Caco-2 (cell line): ENCODE measurements at regions of chr2 and their contacts with region 1.

Region 1: GRCh38 chr2:167964650-167965413 is 282.6 kb downstream of the STK39 start:
- DNase-seq: no peak
- H3K4me3 ChIP-seq: no peak overlapping the region
- H3K4me3 Mint-ChIP-seq: no peak overlapping the region
- H3K27ac Mint-ChIP-seq: no peak overlapping the region
- H3K4me1 ChIP-seq: no peaks in the 10 kb centered on the region
- H3K4me1 Mint-ChIP-seq: no peaks in the 10 kb centered on the region
- H3K27me3 ChIP-seq: no peaks in the 10 kb centered on the region
- H3K27me3 Mint-ChIP-seq: no peaks in the 10 kb centered on the region
- CTCF ChIP-seq: peak; percentile 42 to 45

Region 2: GRCh38 chr2:168006498-168006897 is 41.7 kb after region 1 on chr2:
- CTCF ChIA-PET with region 1: no interaction called
- POLR2A ChIA-PET with region 1: no interaction called
- intact Hi-C with region 1: no loop called
- DNase-seq: no peak
- H3K4me3 ChIP-seq: no peak overlapping the region
- H3K4me3 Mint-ChIP-seq: no peak overlapping the region
- H3K27ac Mint-ChIP-seq: no peak overlapping the region
- H3K4me1 ChIP-seq: peaks cover 10% of the 10 kb centered on the region; the same call in 1 of the 2 replicates
- H3K4me1 Mint-ChIP-seq: peaks cover 13% of the 10 kb centered on the region
- H3K27me3 ChIP-seq: no peaks in the 10 kb centered on the region
- H3K27me3 Mint-ChIP-seq: no peaks in the 10 kb centered on the region
- CTCF ChIP-seq: no peak

Region 3: DNA sequence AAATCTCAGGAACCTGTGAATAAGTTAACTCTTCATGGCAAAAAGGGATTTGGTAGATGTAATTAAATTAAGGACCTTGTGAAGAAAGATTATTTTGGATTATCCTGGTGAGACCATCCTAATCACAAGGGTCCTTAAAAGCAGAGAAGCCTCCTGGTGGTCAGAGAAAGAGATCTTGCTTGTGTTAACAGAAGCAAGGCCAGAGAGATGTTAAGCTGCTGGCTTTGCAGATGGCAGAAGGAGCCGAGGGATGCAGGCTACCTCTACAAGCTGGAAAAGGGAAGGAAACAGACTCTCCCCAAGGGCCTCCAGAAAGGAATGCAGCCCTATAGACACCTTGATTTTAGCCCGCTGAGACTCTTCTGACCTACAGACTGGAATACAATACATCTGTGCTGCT is 85.5 kb after region 1 on chr2:
- CTCF ChIA-PET with region 1: no interaction called
- POLR2A ChIA-PET with region 1: no interaction called
- intact Hi-C with region 1: loop called (anchors 5 kb)
- DNase-seq: no peak
- H3K4me3 ChIP-seq: no peak overlapping the region
- H3K4me3 Mint-ChIP-seq: no peak overlapping the region
- H3K27ac Mint-ChIP-seq: no peak overlapping the region
- H3K4me1 ChIP-seq: no peaks in the 10 kb centered on the region
- H3K4me1 Mint-ChIP-seq: no peaks in the 10 kb centered on the region
- H3K27me3 ChIP-seq: no peaks in the 10 kb centered on the region
- H3K27me3 Mint-ChIP-seq: peaks cover 3% of the 10 kb centered on the region
- CTCF ChIP-seq: peak in 1 of 2 experiments; percentile 11

Region 4: GRCh38 chr2:168084327-168084726 is 119.5 kb after region 1 on chr2:
- CTCF ChIA-PET with region 1: no interaction called
- POLR2A ChIA-PET with region 1: no interaction called
- intact Hi-C with region 1: loop called (anchors 1 kb)
- DNase-seq: no peak
- H3K4me3 ChIP-seq: no peak overlapping the region
- H3K4me3 Mint-ChIP-seq: no peak overlapping the region
- H3K27ac Mint-ChIP-seq: no peak overlapping the region
- H3K4me1 ChIP-seq: no peaks in the 10 kb centered on the region
- H3K4me1 Mint-ChIP-seq: no peaks in the 10 kb centered on the region
- H3K27me3 ChIP-seq: no peaks in the 10 kb centered on the region
- H3K27me3 Mint-ChIP-seq: peaks cover 2% of the 10 kb centered on the region
- CTCF ChIP-seq: no peak